CD8-positive, alpha-beta T cell (primary cell): ENCODE measurements at regions of chr5 and their contacts with region 1.

Region 1: GRCh38 chr5:73387601-73388305 is 60.8 kb downstream of the FOXD1 start:
- DNase-seq: peak; percentile 25 to 83 (median 43)
- ATAC-seq: peak; percentile 93
- H3K4me3 ChIP-seq: no peak overlapping the region
- H3K4me3 Mint-ChIP-seq: peak overlapping the region; percentile 52
- H3K27ac ChIP-seq: no peak overlapping the region
- H3K27ac Mint-ChIP-seq: peak overlapping the region; percentile 53
- H3K4me1 ChIP-seq: peaks cover 28% of the 10 kb centered on the region
- H3K4me1 Mint-ChIP-seq: peaks cover 32% of the 10 kb centered on the region
- H3K27me3 ChIP-seq: peaks cover 2 to 4% of the 10 kb centered on the region in 2 experiments
- H3K27me3 Mint-ChIP-seq: peaks cover 13% of the 10 kb centered on the region
- CTCF ChIP-seq: no peak

Region 2: GRCh38 chr5:72871366-72872024 is 516.3 kb before region 1 on chr5:
- CTCF ChIA-PET with region 1: no interaction called
- POLR2A ChIA-PET with region 1: no interaction called
- intact Hi-C with region 1: no loop called
- DNase-seq: no peak
- ATAC-seq: no peak
- H3K4me3 ChIP-seq: no peak overlapping the region
- H3K4me3 Mint-ChIP-seq: no peak overlapping the region
- H3K27ac ChIP-seq: no peak overlapping the region
- H3K27ac Mint-ChIP-seq: peak overlapping the region; percentile 4
- H3K4me1 ChIP-seq: no peaks in the 10 kb centered on the region
- H3K4me1 Mint-ChIP-seq: peaks cover 17% of the 10 kb centered on the region
- H3K27me3 ChIP-seq: no peaks in the 10 kb centered on the region
- H3K27me3 Mint-ChIP-seq: no peaks in the 10 kb centered on the region
- CTCF ChIP-seq: no peak

Region 3: DNA sequence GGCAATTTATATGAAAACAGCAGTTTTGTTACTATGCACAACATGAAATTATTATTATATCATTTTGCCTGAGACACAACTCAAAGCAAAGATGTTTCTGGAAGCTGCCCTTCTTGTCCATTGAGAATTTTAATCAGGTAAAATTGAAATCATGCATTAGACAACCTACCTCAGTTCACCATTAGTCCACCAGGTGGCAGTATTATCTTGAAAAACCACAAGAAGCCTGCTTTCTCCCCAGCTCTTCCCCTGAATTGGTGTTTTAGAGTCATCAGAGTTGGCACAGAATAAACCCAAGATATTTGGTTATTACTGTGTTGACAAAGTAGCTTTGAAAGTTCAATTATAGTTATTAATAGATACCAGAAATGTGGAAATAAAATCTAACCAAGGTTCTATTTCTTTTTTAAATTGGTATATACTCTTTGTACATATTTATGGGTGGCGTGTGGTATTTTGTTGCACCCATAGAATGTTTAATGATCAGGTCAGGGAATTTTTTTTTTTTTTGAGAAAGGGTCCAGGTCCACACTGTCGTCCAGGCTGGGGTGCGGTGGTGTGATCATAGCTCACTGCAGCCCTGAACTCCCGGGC is 203.4 kb after region 1 on chr5:
- CTCF ChIA-PET with region 1: no interaction called
- POLR2A ChIA-PET with region 1: no interaction called
- intact Hi-C with region 1: no loop called
- DNase-seq: peak in 6 of 9 experiments; percentile 16 to 81 (median 46)
- ATAC-seq: peak; percentile 62
- H3K4me3 ChIP-seq: no peak overlapping the region
- H3K4me3 Mint-ChIP-seq: no peak overlapping the region
- H3K27ac ChIP-seq: no peak overlapping the region
- H3K27ac Mint-ChIP-seq: no peak overlapping the region
- H3K4me1 ChIP-seq: no peaks in the 10 kb centered on the region
- H3K4me1 Mint-ChIP-seq: no peaks in the 10 kb centered on the region
- H3K27me3 ChIP-seq: no peaks in the 10 kb centered on the region
- H3K27me3 Mint-ChIP-seq: no peaks in the 10 kb centered on the region
- CTCF ChIP-seq: peak; percentile 84

Region 4: DNA sequence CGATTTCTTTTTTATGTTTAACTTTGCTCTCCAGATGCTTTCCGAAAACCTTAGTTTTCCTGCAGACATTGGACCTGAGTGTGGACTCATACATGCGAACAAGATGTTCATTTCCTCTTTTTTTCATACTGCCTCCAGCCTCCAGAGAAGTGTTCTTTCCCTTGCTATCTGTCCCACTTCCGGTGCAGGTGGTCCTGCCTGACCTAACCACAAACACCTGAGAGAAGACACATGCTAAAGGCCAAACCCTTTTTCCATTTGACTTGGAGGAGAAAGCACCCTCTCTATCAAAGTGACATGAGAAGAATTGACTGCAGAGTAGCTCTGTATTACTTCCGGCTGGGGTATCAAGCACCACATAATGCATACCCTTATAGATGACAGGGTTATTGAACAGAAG is 572.3 kb after region 1 on chr5:
- CTCF ChIA-PET with region 1: no interaction called
- POLR2A ChIA-PET with region 1: no interaction called
- intact Hi-C with region 1: no loop called
- DNase-seq: no peak
- ATAC-seq: no peak
- H3K4me3 ChIP-seq: no peak overlapping the region
- H3K4me3 Mint-ChIP-seq: no peak overlapping the region
- H3K27ac ChIP-seq: no peak overlapping the region
- H3K27ac Mint-ChIP-seq: no peak overlapping the region
- H3K4me1 ChIP-seq: no peaks in the 10 kb centered on the region
- H3K4me1 Mint-ChIP-seq: no peaks in the 10 kb centered on the region
- H3K27me3 ChIP-seq: no peaks in the 10 kb centered on the region
- H3K27me3 Mint-ChIP-seq: peaks cover 21% of the 10 kb centered on the region
- CTCF ChIP-seq: no peak

Region 5: DNA sequence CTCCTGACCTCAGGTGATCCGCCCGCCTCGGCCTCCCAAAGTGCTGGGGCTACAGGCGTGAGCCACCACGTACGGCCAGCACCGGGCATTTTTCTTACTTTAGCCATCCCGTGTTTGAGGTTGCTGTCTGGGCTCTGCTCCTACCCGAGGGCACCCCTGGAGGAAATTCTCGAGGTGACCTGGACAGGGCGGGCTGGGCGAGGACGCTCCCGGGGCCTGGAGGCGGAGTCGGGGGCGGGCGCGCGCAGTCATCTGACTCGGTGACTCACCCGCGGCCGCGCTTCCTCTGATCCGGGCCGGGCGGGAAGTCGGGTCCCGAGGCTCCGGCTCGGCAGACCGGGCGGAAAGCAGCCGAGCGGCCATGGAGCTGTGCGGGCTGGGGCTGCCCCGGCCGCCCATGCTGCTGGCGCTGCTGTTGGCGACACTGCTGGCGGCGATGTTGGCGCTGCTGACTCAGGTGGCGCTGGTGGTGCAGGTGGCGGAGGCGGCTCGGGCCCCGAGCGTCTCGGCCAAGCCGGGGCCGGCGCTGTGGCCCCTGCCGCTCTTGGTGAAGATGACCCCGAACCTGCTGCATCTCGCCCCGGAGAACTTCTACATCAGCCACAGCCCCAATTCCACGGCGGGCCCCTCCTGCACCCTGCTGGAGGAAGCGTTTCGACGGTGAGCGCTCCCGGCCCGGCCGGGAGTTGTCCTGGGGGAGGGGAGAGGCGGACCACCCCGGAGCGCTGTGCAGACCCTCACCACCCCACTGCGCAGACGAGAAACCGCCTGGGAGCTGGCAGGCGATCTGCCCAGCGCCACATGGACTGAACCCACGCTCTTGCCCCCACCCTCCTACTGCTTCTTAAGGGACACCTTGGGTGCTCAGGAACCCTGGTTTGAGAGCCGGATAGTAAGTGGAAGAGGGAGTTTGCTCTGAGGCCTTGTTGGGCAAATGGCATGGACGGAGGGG is 1297.4 kb after region 1 on chr5 and contains the start of gene HEXB:
- CTCF ChIA-PET with region 1: no interaction called
- POLR2A ChIA-PET with region 1: no interaction called
- intact Hi-C with region 1: loop called in 1 of 2 experiments (anchors 5 kb)
- DNase-seq: peak; percentile 49 to 90 (median 83)
- ATAC-seq: peak; percentile 91
- H3K4me3 ChIP-seq: peak within 1 kb of the TSS; percentile 78 to 80
- H3K4me3 Mint-ChIP-seq: peak within 1 kb of the TSS; percentile 85
- H3K27ac ChIP-seq: peak within 1 kb of the TSS; percentile 55 to 63
- H3K27ac Mint-ChIP-seq: peak within 1 kb of the TSS; percentile 74
- H3K4me1 ChIP-seq: peaks cover 9% of the 10 kb centered on the region
- H3K4me1 Mint-ChIP-seq: peaks cover 24% of the 10 kb centered on the region
- H3K27me3 ChIP-seq: no peaks in the 10 kb centered on the region
- H3K27me3 Mint-ChIP-seq: peaks cover 1% of the 10 kb centered on the region
- CTCF ChIP-seq: no peak
- total RNA-seq, gene HEXB: 29.2 to 37.0 TPM